ENCODE measurements at regions of chr1 and their contacts with region 1.

Region 1: DNA sequence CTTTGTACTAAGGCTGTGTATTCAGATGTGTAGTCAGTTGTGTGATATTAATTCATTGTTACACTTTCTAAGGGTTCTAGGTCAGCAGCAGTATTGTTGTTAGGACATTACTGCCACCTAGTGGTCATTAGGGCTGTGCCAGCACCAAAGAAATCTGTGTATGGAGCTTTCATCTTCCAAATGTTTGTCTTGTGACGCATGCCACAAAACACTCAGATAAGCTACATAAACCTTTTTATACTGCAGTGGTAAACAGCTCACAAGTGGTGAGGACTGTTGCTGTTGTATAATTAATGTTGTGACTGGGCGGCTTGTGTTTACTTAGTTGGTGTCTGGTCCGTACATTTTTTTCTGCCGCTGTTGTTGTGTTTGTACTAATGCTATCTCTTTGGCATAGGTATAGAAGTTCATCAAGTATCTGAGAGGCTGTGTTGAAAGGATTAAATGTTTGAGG is 51.7 kb downstream of the S1PR1 start:
- DNase-seq: peak; percentile 84
- H3K4me3 Mint-ChIP-seq: no peak overlapping the region
- H3K27ac Mint-ChIP-seq: peak overlapping the region; percentile 72
- H3K4me1 Mint-ChIP-seq: peaks cover 84% of the 10 kb centered on the region
- H3K27me3 Mint-ChIP-seq: no peaks in the 10 kb centered on the region

Region 2: GRCh38 chr1:100037927-100038659 is 1250.4 kb before region 1 on chr1:
- CTCF ChIA-PET with region 1: no interaction called
- intact Hi-C with region 1: loop called (anchors 5 kb)
- DNase-seq: peak; percentile 89
- H3K4me3 Mint-ChIP-seq: peak overlapping the region; percentile 95
- H3K27ac Mint-ChIP-seq: peak overlapping the region; percentile 99
- H3K4me1 Mint-ChIP-seq: peaks cover 54% of the 10 kb centered on the region
- H3K27me3 Mint-ChIP-seq: no peaks in the 10 kb centered on the region

Region 3: GRCh38 chr1:100834777-100835660 is 453.5 kb before region 1 on chr1:
- CTCF ChIA-PET with region 1: no interaction called
- intact Hi-C with region 1: loop called (anchors 2 kb)
- DNase-seq: no peak
- H3K4me3 Mint-ChIP-seq: no peak overlapping the region
- H3K27ac Mint-ChIP-seq: no peak overlapping the region
- H3K4me1 Mint-ChIP-seq: no peaks in the 10 kb centered on the region
- H3K27me3 Mint-ChIP-seq: no peaks in the 10 kb centered on the region

Region 4: GRCh38 chr1:101002551-101002950 is 286.0 kb before region 1 on chr1:
- CTCF ChIA-PET with region 1: interaction called, 3 read pairs
- intact Hi-C with region 1: loop called (anchors 1 kb)
- DNase-seq: no peak
- H3K4me3 Mint-ChIP-seq: no peak overlapping the region
- H3K27ac Mint-ChIP-seq: peak overlapping the region; percentile 59
- H3K4me1 Mint-ChIP-seq: peaks cover 52% of the 10 kb centered on the region
- H3K27me3 Mint-ChIP-seq: no peaks in the 10 kb centered on the region

Region 5: GRCh38 chr1:101136739-101137138 is 151.8 kb before region 1 on chr1:
- CTCF ChIA-PET with region 1: interaction called, 131 read pairs
- intact Hi-C with region 1: loop called (anchors 1 kb)
- DNase-seq: peak; percentile 61
- H3K4me3 Mint-ChIP-seq: no peak overlapping the region
- H3K27ac Mint-ChIP-seq: peak overlapping the region; percentile 62
- H3K4me1 Mint-ChIP-seq: peaks cover 67% of the 10 kb centered on the region
- H3K27me3 Mint-ChIP-seq: no peaks in the 10 kb centered on the region

Region 6: GRCh38 chr1:101253976-101254674 is 34.4 kb before region 1 on chr1:
- CTCF ChIA-PET with region 1: interaction called, 38 read pairs
- intact Hi-C with region 1: loop called (anchors 1 kb)
- DNase-seq: no peak
- H3K4me3 Mint-ChIP-seq: no peak overlapping the region
- H3K27ac Mint-ChIP-seq: no peak overlapping the region
- H3K4me1 Mint-ChIP-seq: peaks cover 61% of the 10 kb centered on the region
- H3K27me3 Mint-ChIP-seq: no peaks in the 10 kb centered on the region

Region 7: GRCh38 chr1:101567582-101568189 is 279.2 kb after region 1 on chr1:
- CTCF ChIA-PET with region 1: no interaction called
- intact Hi-C with region 1: no loop called
- DNase-seq: peak; percentile 64
- H3K4me3 Mint-ChIP-seq: no peak overlapping the region
- H3K27ac Mint-ChIP-seq: no peak overlapping the region
- H3K4me1 Mint-ChIP-seq: peaks cover 3% of the 10 kb centered on the region
- H3K27me3 Mint-ChIP-seq: peaks cover 2% of the 10 kb centered on the region

Measured in activated naive CD4-positive, alpha-beta T cell treated with anti-CD3 and anti-CD28 coated beads for 36 hours (primary cell).